PC-9 (cell line): ENCODE measurements at regions of chr1 and their contacts with region 1.

Region 1: GRCh38 chr1:97920832-97921571 is at the start of gene DPYD:
- DNase-seq: peak; percentile 85 to 92
- H3K4me3 ChIP-seq: peak within 1 kb of the TSS; percentile 81
- H3K27ac ChIP-seq: peak within 1 kb of the TSS; percentile 42
- H3K4me1 ChIP-seq: peaks cover 21% of the 10 kb centered on the region
- H3K27me3 ChIP-seq: no peaks in the 10 kb centered on the region
- CTCF ChIP-seq: no peak
- total RNA-seq, gene DPYD: 20.0 and 24.1 TPM in 2 replicates

Region 2: GRCh38 chr1:96966536-96967138 is 954.4 kb before region 1 on chr1:
- CTCF ChIA-PET with region 1: no interaction called
- POLR2A ChIA-PET with region 1: no interaction called
- intact Hi-C with region 1: loop called (anchors 10 kb)
- DNase-seq: peak; percentile 57 to 74
- H3K4me3 ChIP-seq: peak overlapping the region; percentile 42; the same call in 1 of the 2 replicates
- H3K27ac ChIP-seq: no peak overlapping the region
- H3K4me1 ChIP-seq: 0 out of 2 replicates have a peak, but pooled peaks cover 3% of the 10 kb centered on the region
- H3K27me3 ChIP-seq: no peaks in the 10 kb centered on the region
- CTCF ChIP-seq: peak; percentile 99

Region 3: GRCh38 chr1:97581614-97582051 is 339.4 kb before region 1 on chr1:
- CTCF ChIA-PET with region 1: no interaction called
- POLR2A ChIA-PET with region 1: interaction called, 15 read pairs
- intact Hi-C with region 1: no loop called
- DNase-seq: peak; percentile 40 to 74
- H3K4me3 ChIP-seq: no peak overlapping the region
- H3K27ac ChIP-seq: peak overlapping the region; percentile 7; the same call in 1 of the 2 replicates
- H3K4me1 ChIP-seq: no peaks in the 10 kb centered on the region
- H3K27me3 ChIP-seq: no peaks in the 10 kb centered on the region
- CTCF ChIP-seq: no peak

Region 4: GRCh38 chr1:97693601-97694000 is 227.4 kb before region 1 on chr1:
- CTCF ChIA-PET with region 1: no interaction called
- POLR2A ChIA-PET with region 1: no interaction called
- intact Hi-C with region 1: no loop called
- DNase-seq: no peak
- H3K4me3 ChIP-seq: no peak overlapping the region
- H3K27ac ChIP-seq: no peak overlapping the region
- H3K4me1 ChIP-seq: no peaks in the 10 kb centered on the region
- H3K27me3 ChIP-seq: no peaks in the 10 kb centered on the region
- CTCF ChIP-seq: no peak

Region 5: DNA sequence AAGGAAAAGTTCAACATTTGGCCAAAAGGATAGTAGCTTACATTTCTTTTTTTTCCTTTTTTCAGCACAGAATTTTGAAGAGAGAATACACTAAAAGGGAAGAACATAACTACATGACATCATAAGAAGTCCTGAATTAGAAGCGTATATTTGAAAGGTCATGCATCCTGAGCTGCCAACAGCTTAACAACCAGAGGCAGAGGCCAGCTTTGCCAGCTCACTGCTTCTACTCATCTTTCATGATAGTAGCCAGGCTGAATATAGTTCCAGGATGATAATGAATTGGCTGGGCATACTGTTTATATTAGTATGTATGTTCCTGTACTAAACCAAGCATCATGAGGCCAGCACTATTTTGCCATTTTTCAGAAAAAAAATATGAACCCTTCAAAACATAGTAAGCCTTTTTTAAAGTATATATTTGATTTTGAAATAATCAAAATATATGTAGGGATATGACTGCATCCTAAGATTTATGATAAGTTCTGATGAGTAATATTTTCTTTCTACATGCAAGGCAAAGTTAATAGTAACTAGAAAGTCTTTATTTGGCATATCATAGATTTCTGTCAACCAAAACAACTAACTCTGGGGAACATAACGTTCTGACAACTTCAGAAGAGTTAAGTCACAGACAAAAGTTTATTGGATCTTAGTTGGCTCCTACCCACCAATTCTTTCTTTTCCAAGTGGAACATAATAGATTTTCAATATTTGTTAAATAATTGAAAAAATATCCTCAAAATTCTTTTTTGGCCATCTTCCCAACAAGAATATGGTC is 123.4 kb before region 1 on chr1:
- CTCF ChIA-PET with region 1: no interaction called
- POLR2A ChIA-PET with region 1: no interaction called
- intact Hi-C with region 1: no loop called
- DNase-seq: no peak
- H3K4me3 ChIP-seq: no peak overlapping the region
- H3K27ac ChIP-seq: no peak overlapping the region
- H3K4me1 ChIP-seq: no peaks in the 10 kb centered on the region
- H3K27me3 ChIP-seq: no peaks in the 10 kb centered on the region
- CTCF ChIP-seq: no peak

Region 6: DNA sequence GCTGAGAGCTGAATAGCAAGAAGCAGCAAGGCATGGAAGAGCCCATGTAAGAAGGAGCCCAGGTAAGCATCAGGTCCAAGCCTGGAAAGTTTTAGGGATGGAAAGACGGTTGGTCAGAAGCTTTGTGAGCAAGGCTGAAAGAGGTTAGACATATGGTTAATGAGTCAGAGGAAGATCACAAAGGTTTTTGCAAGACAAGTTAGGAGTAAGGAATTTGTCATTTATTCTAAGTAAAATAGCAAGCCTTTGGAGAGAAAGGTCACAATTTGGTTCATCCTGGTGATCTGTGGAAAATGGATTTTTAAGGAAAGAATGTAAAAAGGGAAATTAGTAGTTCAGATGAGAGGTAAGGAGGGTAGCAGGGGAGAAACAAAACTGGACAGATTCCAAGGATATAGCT is 106.9 kb before region 1 on chr1:
- CTCF ChIA-PET with region 1: no interaction called
- POLR2A ChIA-PET with region 1: no interaction called
- intact Hi-C with region 1: no loop called
- DNase-seq: peak in 1 of 2 experiments; percentile 8
- H3K4me3 ChIP-seq: no peak overlapping the region
- H3K27ac ChIP-seq: no peak overlapping the region
- H3K4me1 ChIP-seq: no peaks in the 10 kb centered on the region
- H3K27me3 ChIP-seq: no peaks in the 10 kb centered on the region
- CTCF ChIP-seq: no peak

Region 7: GRCh38 chr1:97938285-97938642 is 17.3 kb after region 1 on chr1:
- CTCF ChIA-PET with region 1: no interaction called
- POLR2A ChIA-PET with region 1: no interaction called
- intact Hi-C with region 1: loop called (anchors 2 kb)
- DNase-seq: no peak
- H3K4me3 ChIP-seq: peak overlapping the region; percentile 1; the same call in 1 of the 2 replicates
- H3K27ac ChIP-seq: peak overlapping the region; percentile 67
- H3K4me1 ChIP-seq: peaks cover 28% of the 10 kb centered on the region
- H3K27me3 ChIP-seq: no peaks in the 10 kb centered on the region
- CTCF ChIP-seq: no peak

Region 8: DNA sequence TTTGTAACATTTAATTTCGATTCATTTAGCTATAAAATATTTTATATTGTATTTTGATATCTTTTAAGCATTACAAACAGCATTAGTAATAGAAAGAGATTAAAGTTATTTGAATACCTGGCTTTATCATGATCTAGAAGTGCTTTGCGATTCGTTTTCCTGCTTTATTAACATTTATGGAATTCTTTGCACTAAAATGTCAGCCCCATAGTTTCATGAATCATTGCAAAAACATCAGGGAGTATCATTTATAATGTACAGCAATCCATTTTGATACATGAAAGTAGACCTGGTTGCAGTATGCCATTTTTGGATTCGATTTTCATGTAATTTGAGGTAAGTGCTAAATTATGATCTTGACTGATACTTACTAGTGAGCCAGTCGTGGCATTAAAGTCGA is 107.8 kb after region 1 on chr1:
- CTCF ChIA-PET with region 1: no interaction called
- POLR2A ChIA-PET with region 1: no interaction called
- intact Hi-C with region 1: loop called (anchors 5 kb)
- DNase-seq: no peak
- H3K4me3 ChIP-seq: no peak overlapping the region
- H3K27ac ChIP-seq: no peak overlapping the region
- H3K4me1 ChIP-seq: no peaks in the 10 kb centered on the region; the same call in 1 of the 2 replicates
- H3K27me3 ChIP-seq: no peaks in the 10 kb centered on the region
- CTCF ChIP-seq: no peak

Region 9: DNA sequence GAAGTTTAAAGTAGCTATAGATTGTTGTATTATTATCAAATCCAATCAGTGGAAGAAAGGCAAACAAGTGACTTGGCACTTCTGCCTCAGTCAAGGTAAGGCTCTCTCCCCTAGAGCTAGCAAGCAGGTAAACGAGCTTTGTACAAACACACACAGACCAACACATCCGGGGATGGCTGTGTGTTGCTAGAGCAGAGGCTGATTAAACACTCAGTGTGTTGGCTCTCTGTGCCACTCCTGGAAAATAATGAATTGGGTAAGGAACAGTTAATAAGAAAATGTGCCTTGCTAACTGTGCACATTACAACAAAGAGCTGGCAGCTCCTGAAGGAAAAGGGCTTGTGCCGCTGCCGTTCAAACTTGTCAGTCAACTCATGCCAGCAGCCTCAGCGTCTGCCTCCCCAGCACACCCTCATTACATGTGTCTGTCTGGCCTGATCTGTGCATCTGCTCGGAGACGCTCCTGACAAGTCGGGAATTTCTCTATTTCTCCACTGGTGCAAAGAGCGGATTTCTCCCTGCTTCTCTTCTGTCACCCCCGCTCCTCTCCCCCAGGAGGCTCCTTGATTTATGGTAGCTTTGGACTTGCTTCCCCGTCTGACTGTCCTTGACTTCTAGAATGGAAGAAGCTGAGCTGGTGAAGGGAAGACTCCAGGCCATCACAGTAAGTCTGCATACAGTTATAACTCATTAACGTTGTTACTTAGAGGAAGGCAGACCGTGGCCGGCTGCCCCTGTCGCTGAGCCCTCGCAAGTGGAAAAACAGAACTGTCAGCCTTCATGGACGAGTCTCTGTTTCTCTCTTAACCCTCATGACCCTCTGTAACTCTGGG is 1724.9 kb after region 1 on chr1 and contains the start of gene PALMD:
- CTCF ChIA-PET with region 1: no interaction called
- POLR2A ChIA-PET with region 1: interaction called, 23 read pairs
- intact Hi-C with region 1: no loop called
- DNase-seq: peak; percentile 36 to 83
- H3K4me3 ChIP-seq: peak within 1 kb of the TSS; percentile 57
- H3K27ac ChIP-seq: peak within 1 kb of the TSS; percentile 78
- H3K4me1 ChIP-seq: peaks cover 53% of the 10 kb centered on the region
- H3K27me3 ChIP-seq: no peaks in the 10 kb centered on the region
- CTCF ChIP-seq: no peak
- total RNA-seq, gene PALMD: 0.68 and 1.2 TPM in 2 replicates